Activated naive CD8-positive, alpha-beta T cell treated with anti-CD3 and anti-CD28 coated beads, Interleukin-2, amount 10 ng/mL, durations not matched to agents 7 days and 5 days (primary cell): ENCODE measurements at regions of chr9 and their contacts with region 1.

Region 1: DNA sequence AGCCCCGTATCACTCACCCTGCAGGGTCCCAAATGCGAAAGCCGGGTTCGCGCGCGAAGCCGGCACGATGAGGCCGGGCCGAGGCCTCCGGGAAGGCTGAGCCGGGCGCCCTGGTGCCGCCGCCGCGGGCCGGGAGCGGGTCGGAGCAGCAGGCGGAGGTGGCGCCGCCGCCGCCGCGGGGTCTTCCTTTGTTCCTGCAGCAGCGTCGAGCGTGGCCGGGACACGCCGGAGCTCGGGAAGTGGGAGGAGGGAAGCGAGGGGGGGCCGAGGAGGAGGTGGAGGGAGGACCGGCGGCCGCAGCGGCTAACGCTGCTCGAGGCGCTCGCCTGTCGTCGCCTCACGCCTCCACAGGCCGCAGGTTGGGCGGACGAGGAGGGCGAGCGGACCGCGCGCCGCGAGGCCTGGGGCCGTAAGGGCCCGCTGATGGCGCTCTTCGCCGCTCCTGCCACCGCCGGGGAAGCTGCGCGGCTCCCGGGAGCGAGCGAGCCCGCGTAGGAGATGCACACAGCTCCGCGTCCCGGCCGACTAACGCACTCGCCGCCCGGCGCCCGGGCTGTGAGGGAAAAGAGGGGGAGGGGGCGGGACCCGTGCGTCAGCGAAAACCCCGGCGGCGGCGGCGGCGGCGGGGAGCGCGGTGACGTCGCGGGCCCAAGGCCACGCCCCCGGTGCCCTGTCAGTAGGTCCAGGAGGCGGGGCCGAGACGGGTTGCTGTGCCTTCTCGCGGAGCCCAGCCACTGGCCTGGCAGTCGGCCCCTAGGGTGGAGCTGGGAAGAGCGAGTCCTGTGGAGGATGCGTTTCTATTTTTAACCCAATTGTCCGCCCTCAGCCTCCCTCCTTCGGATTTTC is at the start of gene ZFAND5:
- DNase-seq: peak; percentile 93
- ATAC-seq: peak; percentile 75
- H3K4me3 Mint-ChIP-seq: peak within 1 kb of the TSS; percentile 92
- H3K27ac Mint-ChIP-seq: peak within 1 kb of the TSS; percentile 92
- H3K4me1 Mint-ChIP-seq: peaks cover 26% of the 10 kb centered on the region
- H3K27me3 Mint-ChIP-seq: no peaks in the 10 kb centered on the region
- total RNA-seq, gene ZFAND5: 83.3 to 83.7 TPM

Region 2: DNA sequence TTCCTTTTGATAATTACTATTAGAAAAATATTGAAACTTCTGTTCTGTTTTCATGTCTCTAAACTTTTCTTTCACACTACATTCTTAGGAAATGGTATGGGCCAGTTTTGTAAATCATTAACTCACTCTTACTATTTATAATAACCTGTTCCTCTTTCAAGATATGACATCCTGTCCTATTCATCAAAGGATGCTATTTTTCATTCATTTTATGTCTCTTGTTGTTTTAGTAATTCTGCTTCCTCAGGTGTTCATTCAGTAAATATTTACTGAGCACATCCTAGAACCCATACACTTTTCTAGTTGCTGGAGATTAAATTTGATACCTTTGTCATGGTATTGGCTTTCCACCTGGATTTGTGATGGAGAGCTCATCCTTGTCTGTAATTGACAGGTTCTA is 157.6 kb before region 1 on chr9:
- POLR2A ChIA-PET with region 1: no interaction called
- DNase-seq: no peak
- ATAC-seq: no peak
- H3K4me3 Mint-ChIP-seq: no peak overlapping the region
- H3K27ac Mint-ChIP-seq: no peak overlapping the region
- H3K4me1 Mint-ChIP-seq: no peaks in the 10 kb centered on the region
- H3K27me3 Mint-ChIP-seq: peaks cover 13% of the 10 kb centered on the region

Region 3: GRCh38 chr9:72382405-72382804 is 17.5 kb after region 1 on chr9:
- POLR2A ChIA-PET with region 1: no interaction called
- DNase-seq: no peak
- ATAC-seq: no peak
- H3K4me3 Mint-ChIP-seq: no peak overlapping the region
- H3K27ac Mint-ChIP-seq: no peak overlapping the region
- H3K4me1 Mint-ChIP-seq: no peaks in the 10 kb centered on the region
- H3K27me3 Mint-ChIP-seq: peaks cover 6% of the 10 kb centered on the region

Region 4: GRCh38 chr9:72396247-72397091 is 31.6 kb after region 1 on chr9:
- POLR2A ChIA-PET with region 1: no interaction called
- DNase-seq: no peak
- ATAC-seq: no peak
- H3K4me3 Mint-ChIP-seq: no peak overlapping the region
- H3K27ac Mint-ChIP-seq: no peak overlapping the region
- H3K4me1 Mint-ChIP-seq: no peaks in the 10 kb centered on the region
- H3K27me3 Mint-ChIP-seq: peaks cover 6% of the 10 kb centered on the region

Region 5: GRCh38 chr9:72443855-72444254 is 79.0 kb after region 1 on chr9:
- POLR2A ChIA-PET with region 1: interaction called, 10 read pairs
- DNase-seq: no peak
- ATAC-seq: peak; percentile 66
- H3K4me3 Mint-ChIP-seq: no peak overlapping the region
- H3K27ac Mint-ChIP-seq: no peak overlapping the region
- H3K4me1 Mint-ChIP-seq: peaks cover 24% of the 10 kb centered on the region
- H3K27me3 Mint-ChIP-seq: peaks cover 6% of the 10 kb centered on the region

Region 6: DNA sequence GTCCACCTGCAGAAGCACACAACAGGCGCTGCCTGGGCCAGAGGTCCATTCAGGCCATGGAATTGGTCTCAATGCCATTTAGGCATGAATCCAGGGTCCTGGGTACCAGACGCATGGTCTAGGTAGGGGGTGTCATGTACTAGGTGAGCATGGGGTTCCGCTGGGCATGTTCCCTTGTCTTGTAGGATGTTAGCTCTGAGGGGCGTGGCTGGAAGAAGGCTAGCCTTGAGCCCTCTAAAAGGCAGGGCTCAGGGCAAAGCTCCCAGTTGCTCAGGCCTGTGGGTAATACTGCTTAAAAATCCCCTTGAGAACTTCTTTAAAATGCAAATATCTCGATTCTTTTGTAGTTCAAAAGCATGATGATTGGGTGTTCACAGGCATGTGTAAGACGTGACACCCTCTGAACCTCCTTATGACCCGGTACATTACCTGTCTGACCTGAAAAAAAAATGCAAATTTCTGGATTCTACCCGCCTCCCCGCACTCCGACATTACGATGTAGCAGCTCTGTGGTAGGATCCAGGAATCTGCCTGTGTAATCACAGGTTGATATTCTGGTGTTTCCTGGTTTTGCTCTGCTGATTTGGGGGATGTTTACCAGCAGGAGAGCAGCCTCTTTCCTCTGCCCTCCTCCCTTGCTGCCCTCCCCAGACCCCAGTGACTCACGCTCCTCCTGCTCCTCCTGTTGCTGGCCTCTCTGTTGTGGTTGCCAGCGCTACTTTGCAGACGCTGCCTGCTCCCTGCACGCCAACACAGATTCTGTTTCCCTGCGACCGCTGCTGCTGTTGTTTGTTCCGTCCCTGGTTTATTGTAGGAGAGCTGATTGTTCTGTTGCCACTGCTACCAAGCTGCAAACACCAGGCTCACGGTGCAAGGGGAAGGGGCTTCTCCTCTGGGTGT is 162.2 kb after region 1 on chr9:
- POLR2A ChIA-PET with region 1: interaction called, 17 read pairs
- DNase-seq: peak; percentile 68
- ATAC-seq: peak; percentile 98
- H3K4me3 Mint-ChIP-seq: peak overlapping the region; percentile 79
- H3K27ac Mint-ChIP-seq: peak overlapping the region; percentile 89
- H3K4me1 Mint-ChIP-seq: peaks cover 21% of the 10 kb centered on the region
- H3K27me3 Mint-ChIP-seq: no peaks in the 10 kb centered on the region